ENCODE measurements at regions of chr10 and their contacts with region 1.

Region 1: GRCh38 chr10:94991243-94991888 is 52.9 kb downstream of the CYP2C9 start:
- DNase-seq: no peak
- H3K4me3 ChIP-seq: no peak overlapping the region
- H3K27ac ChIP-seq: no peak overlapping the region
- H3K4me1 ChIP-seq: no peaks in the 10 kb centered on the region
- H3K27me3 ChIP-seq: no peaks in the 10 kb centered on the region
- CTCF ChIP-seq: no peak
- EP300 ChIP-seq: no peak
- POLR2A ChIP-seq: no peak

Region 2: GRCh38 chr10:95229724-95230627 is 238.6 kb after region 1 on chr10:
- in situ Hi-C with region 1: no loop called
- intact Hi-C with region 1: loop called (anchors 5 kb)
- DNase-seq: no peak
- H3K4me3 ChIP-seq: peak overlapping the region in 3 of 4 donors; percentile 16 to 40 (median 30)
- H3K27ac ChIP-seq: no peak overlapping the region
- H3K4me1 ChIP-seq: peaks cover 0 to 8% (median 0%) of the 10 kb centered on the region in 4 donors
- H3K27me3 ChIP-seq: no peaks in the 10 kb centered on the region
- CTCF ChIP-seq: no peak
- EP300 ChIP-seq: no peak
- POLR2A ChIP-seq: no peak